ENCODE measurements at regions of chr9 and their contacts with region 1.

Region 1: DNA sequence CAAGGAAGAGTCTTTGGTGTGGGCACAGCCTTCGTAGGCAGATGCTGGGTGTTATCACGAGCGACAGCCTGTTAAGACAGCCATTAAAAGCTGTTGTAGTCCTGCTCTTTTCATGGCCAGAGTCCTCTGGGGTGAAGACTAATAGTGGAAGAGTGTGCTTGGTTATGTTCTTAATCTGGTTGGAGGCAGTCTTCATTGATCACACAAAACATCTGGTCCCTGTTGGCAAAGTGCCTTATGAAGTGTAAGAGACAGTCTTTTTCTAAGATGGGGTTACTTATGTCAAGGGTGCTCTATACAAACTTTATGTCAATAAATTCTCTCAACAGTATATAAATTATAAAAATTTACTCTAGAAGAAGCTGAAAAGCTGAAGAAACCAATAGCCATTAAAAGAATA is 280.4 kb downstream of the CAAP1 start:
- DNase-seq: no peak
- H3K4me3 ChIP-seq: no peak overlapping the region
- H3K27ac ChIP-seq: no peak overlapping the region
- H3K4me1 ChIP-seq: no peaks in the 10 kb centered on the region
- H3K27me3 ChIP-seq: no peaks in the 10 kb centered on the region
- CTCF ChIP-seq: no peak

Region 2: GRCh38 chr9:26326473-26327044 is 285.7 kb before region 1 on chr9:
- CTCF ChIA-PET with region 1: no interaction called
- dilution Hi-C with region 1: no loop called
- in situ Hi-C with region 1: no loop called
- intact Hi-C with region 1: loop called (anchors 5 kb)
- DNase-seq: peak; percentile 40
- H3K4me3 ChIP-seq: no peak overlapping the region
- H3K27ac ChIP-seq: no peak overlapping the region
- H3K4me1 ChIP-seq: no peaks in the 10 kb centered on the region
- H3K27me3 ChIP-seq: peaks cover 1% of the 10 kb centered on the region
- CTCF ChIP-seq: peak; percentile 83 to 91

Measured in mammary epithelial cell (primary cell).